Calu3 (cell line): ENCODE measurements at regions of chr19 and their contacts with region 1.

Region 1: GRCh38 chr19:38929929-38930775 is at the start of gene SARS2:
- DNase-seq: peak; percentile 97
- H3K4me3 Mint-ChIP-seq: peak within 1 kb of the TSS; percentile 98
- H3K27ac Mint-ChIP-seq: peak within 1 kb of the TSS; percentile 93
- H3K4me1 Mint-ChIP-seq: peaks cover 23% of the 10 kb centered on the region
- H3K27me3 Mint-ChIP-seq: no peaks in the 10 kb centered on the region
- CTCF ChIP-seq: peak; percentile 99
- total RNA-seq, gene SARS2: 52.1 and 58.1 TPM in 2 replicates

Region 2: GRCh38 chr19:38899447-38900219 is 30.5 kb before region 1 on chr19 and contains the starts of genes NFKBIB and SIRT2:
- CTCF ChIA-PET with region 1: interaction called, 17 read pairs
- intact Hi-C with region 1: no loop called
- DNase-seq: peak; percentile 99
- H3K4me3 Mint-ChIP-seq: peak within 1 kb of the TSS; percentile 83
- H3K27ac Mint-ChIP-seq: peak within 1 kb of the TSS; percentile 91
- H3K4me1 Mint-ChIP-seq: peaks cover 27% of the 10 kb centered on the region
- H3K27me3 Mint-ChIP-seq: no peaks in the 10 kb centered on the region
- CTCF ChIP-seq: no peak
- total RNA-seq, gene NFKBIB: 54.4 and 62.6 TPM in 2 replicates
- total RNA-seq, gene SIRT2: 51.7 and 55.6 TPM in 2 replicates